ENCODE measurements at regions of chr1 and their contacts with region 1.

Region 1: DNA sequence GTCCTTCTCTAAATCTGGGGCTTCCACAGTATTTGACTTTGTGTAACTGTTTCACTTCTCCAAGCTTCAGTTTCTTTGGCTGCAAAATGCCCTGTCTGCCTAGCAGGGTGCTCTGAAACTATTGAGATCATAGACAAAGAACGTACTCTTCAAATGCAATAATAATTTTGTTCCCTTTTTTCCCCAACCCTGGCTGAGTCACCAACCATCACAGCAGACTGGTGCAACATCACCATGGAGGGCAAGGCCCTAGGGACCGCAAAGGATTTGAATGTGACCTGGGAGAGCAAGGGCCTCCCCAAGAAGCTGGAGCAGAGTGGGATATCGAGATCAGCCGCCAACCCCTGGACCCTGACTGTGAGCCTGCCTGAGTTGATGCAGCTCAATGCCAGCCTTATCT is 115.0 kb downstream of the FCRL5 start:
- DNase-seq: no peak
- ATAC-seq: no peak

Region 2: GRCh38 chr1:157384252-157384651 is 53.0 kb before region 1 on chr1:
- intact Hi-C with region 1: loop called (anchors 2 kb)
- DNase-seq: no peak
- ATAC-seq: no peak

Measured in sciatic nerve (tissue), 2 donors.